Colonic mucosa (tissue), 4 donors: ENCODE measurements at regions of chr17 and their contacts with region 1.

Region 1: GRCh38 chr17:7745748-7746470 is 28.4 kb downstream of the DNAH2 start:
- DNase-seq: no peak
- H3K4me3 ChIP-seq: no peak overlapping the region
- H3K27ac ChIP-seq: no peak overlapping the region
- H3K4me1 ChIP-seq: no peaks in the 10 kb centered on the region
- H3K27me3 ChIP-seq: no peaks in the 10 kb centered on the region
- CTCF ChIP-seq: no peak

Region 2: GRCh38 chr17:7612294-7612640 is 133.6 kb before region 1 on chr17:
- intact Hi-C with region 1: no loop called
- DNase-seq: no peak
- H3K4me3 ChIP-seq: no peak overlapping the region
- H3K27ac ChIP-seq: no peak overlapping the region
- H3K4me1 ChIP-seq: peaks cover 8% of the 10 kb centered on the region
- H3K27me3 ChIP-seq: no peaks in the 10 kb centered on the region
- CTCF ChIP-seq: no peak

Region 3: GRCh38 chr17:7676533-7676932 is 69.4 kb before region 1 on chr17:
- intact Hi-C with region 1: no loop called
- DNase-seq: no peak
- H3K4me3 ChIP-seq: no peak overlapping the region
- H3K27ac ChIP-seq: no peak overlapping the region
- H3K4me1 ChIP-seq: no peaks in the 10 kb centered on the region
- H3K27me3 ChIP-seq: no peaks in the 10 kb centered on the region
- CTCF ChIP-seq: no peak

Region 4: DNA sequence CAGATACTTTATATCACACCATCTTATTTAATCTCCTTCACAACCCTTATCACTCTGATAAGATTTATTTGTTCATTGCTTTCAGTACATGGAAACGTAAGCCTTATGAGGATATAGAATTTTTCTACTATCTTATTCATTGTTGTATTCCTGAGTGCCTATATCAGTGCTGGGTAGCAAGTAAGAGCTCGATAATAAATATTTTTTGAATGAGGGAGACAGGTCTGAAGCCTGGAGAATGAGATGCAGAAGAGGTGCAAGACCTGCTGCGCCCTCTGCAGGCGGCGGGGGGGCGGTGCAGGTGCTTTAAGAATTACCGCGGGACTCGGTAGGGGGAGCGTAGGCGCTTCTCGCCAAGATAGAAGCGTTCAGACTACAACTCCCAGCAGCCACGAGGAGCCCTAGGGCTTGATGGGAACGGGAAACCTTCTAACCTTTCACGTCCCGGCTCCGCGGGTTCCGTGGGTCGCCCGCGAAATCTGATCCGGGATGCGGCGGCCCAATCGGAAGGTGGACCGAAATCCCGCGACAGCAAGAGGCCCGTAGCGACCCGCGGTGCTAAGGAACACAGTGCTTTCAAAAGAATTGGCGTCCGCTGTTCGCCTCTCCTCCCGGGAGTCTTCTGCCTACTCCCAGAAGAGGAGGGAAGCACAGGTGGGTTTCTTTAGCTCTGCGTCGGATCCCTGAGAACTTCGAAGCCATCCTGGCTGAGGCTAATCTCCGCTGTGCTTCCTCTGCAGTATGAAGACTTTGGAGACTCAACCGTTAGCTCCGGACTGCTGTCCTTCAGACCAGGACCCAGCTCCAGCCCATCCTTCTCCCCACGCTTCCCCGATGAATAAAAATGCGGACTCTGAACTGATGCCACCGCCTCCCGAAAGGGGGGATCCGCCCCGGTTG is 57.8 kb before region 1 on chr17 and contains the start of gene WRAP53:
- intact Hi-C with region 1: no loop called
- DNase-seq: peak; percentile 99
- H3K4me3 ChIP-seq: peak within 1 kb of the TSS; percentile 76
- H3K27ac ChIP-seq: peak within 1 kb of the TSS; percentile 97
- H3K4me1 ChIP-seq: peaks cover 11% of the 10 kb centered on the region
- H3K27me3 ChIP-seq: no peaks in the 10 kb centered on the region
- CTCF ChIP-seq: peak; percentile 100
- total RNA-seq, gene WRAP53: 6.0 to 22.6 TPM

Region 5: DNA sequence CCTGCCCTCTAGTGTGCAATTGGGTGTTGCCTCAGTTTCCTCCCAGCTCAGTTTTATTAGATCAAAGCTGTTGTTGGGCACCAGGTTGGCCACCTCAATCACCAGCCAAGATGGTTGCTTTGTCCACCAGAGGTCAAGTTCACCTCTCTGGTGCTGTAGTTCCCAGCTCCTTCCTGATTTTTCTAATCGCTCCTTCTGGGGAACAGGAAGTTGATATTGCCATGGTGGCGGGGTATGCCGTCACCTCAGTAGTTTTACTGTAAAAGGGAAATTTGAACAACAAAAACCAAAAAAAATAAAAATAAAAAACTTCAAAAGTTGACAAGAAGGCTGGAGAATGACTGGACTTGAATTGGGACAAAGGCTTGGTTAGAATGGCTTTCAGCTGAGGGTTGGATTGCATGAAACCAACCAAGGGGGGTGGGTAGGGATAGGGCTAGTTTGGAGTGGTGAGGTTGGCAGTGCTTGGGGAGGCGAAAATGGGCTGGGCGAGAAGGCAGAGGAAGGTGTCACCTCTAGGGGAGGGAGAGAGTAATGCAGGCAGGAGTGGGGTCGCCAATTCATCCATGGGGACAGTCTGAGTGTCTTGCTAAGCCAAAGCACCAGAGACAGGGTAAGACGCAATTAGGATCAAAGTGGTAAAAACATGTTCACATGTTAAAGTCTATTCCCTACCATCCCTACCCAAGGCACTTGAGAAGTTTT is 34.7 kb before region 1 on chr17:
- intact Hi-C with region 1: no loop called
- DNase-seq: no peak
- H3K4me3 ChIP-seq: no peak overlapping the region
- H3K27ac ChIP-seq: no peak overlapping the region
- H3K4me1 ChIP-seq: no peaks in the 10 kb centered on the region
- H3K27me3 ChIP-seq: peaks cover 6% of the 10 kb centered on the region
- CTCF ChIP-seq: no peak

Region 6: DNA sequence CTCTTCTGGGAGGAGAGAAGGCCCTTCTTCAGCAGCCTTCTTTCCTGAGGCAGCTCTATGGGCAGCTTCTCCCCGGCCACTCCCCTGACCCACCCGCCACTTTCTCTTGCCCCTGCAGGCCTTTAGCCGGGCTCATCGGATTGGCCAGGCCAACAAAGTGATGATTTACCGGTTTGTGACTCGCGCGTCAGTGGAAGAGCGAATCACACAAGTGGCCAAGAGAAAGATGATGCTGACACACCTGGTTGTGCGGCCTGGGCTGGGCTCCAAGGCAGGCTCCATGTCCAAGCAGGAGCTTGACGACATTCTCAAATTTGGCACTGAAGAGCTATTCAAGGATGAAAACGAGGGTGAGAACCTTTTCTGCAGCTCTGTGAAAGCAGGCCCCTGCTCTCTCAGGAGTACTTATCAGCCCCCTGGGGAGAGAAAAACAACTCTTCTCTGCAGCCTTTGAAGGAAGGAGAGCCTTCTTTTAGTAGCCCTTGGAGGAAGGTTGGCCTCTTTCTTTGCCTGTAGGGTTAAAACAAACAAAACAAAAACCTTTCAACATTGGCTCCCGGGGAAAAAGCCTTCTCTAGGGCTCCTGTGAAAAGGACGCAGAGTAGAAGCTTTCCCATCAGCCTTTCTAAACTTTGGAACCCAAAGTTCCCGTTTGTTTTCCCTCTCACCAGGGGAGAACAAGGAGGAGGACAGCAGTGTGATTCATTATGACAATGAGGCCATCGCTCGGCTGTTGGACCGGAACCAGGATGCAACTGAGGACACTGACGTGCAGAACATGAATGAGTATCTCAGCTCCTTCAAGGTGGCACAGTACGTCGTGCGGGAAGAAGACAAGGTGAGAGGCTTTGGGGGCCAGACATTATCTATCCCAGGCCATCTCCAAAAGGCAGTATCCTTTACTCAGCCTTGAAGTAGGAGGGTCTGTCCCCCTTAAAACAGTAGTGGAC is 157.5 kb after region 1 on chr17:
- intact Hi-C with region 1: loop called (anchors 10 kb)
- DNase-seq: no peak
- H3K4me3 ChIP-seq: no peak overlapping the region
- H3K27ac ChIP-seq: no peak overlapping the region
- H3K4me1 ChIP-seq: no peaks in the 10 kb centered on the region
- H3K27me3 ChIP-seq: no peaks in the 10 kb centered on the region
- CTCF ChIP-seq: no peak